ENCODE measurements at regions of chr16 and their contacts with region 1.

Region 1: GRCh38 chr16:65559846-65560245 is 438.0 kb upstream of the CDH11 start:
- DNase-seq: no peak
- ATAC-seq: no peak
- H3K4me3 ChIP-seq: no peak overlapping the region
- H3K27ac ChIP-seq: no peak overlapping the region
- H3K4me1 ChIP-seq: no peaks in the 10 kb centered on the region
- H3K27me3 ChIP-seq: no peaks in the 10 kb centered on the region
- CTCF ChIP-seq: no peak

Region 2: GRCh38 chr16:65500007-65500406 is 59.8 kb before region 1 on chr16:
- intact Hi-C with region 1: loop called in 1 of 10 experiments (anchors 10 kb)
- DNase-seq: no peak
- ATAC-seq: no peak
- H3K4me3 ChIP-seq: no peak overlapping the region
- H3K27ac ChIP-seq: no peak overlapping the region
- H3K4me1 ChIP-seq: peaks cover 0 to 3% (median 0%) of the 10 kb centered on the region in 9 donors
- H3K27me3 ChIP-seq: peaks cover 0 to 3% (median 0%) of the 10 kb centered on the region in 7 donors
- CTCF ChIP-seq: no peak

Region 3: DNA sequence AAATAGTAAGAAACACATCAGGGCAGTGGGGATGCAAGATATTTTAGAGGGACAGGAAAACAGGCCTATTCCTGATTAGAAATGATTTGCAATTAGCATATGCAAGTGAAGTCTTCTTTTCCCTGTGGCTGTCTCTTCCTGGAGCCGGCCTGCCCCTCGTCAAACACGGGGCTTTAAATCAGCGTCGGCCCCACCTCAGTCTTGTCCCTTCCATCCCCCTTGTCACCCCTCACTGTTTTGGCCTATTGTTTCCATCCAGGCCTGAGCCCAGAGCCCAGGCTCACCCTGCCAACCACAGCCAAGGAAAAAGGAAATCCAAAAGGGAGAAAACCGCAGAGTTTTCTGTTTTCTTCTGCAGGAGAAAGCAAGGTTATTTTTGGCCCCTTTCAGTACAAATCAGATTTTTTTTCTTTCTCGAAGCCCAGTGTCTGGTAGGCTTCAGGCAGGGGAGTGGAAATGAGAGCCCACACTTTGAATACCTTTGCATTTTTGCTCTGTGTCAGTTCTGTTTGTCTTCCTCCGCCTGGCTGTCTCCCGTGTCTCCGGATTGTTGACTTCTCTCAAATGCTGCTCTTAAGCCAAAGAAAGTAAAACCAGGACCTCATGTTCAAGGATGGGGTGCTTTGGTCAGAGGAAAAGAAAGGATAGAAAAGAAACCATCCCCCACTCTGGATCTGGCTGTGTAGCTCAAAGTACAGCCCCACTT is 38.1 kb before region 1 on chr16:
- intact Hi-C with region 1: no loop called
- DNase-seq: no peak
- ATAC-seq: peak in 2 of 8 donors; percentile 7 to 19
- H3K4me3 ChIP-seq: no peak overlapping the region
- H3K27ac ChIP-seq: peak overlapping the region in 2 of 10 donors; percentile 1 to 2
- H3K4me1 ChIP-seq: peaks cover 0 to 20% (median 0%) of the 10 kb centered on the region in 9 donors
- H3K27me3 ChIP-seq: no peaks in the 10 kb centered on the region
- CTCF ChIP-seq: no peak